Calu3 (cell line): ENCODE measurements at regions of chr1 and their contacts with region 1.

Region 1: DNA sequence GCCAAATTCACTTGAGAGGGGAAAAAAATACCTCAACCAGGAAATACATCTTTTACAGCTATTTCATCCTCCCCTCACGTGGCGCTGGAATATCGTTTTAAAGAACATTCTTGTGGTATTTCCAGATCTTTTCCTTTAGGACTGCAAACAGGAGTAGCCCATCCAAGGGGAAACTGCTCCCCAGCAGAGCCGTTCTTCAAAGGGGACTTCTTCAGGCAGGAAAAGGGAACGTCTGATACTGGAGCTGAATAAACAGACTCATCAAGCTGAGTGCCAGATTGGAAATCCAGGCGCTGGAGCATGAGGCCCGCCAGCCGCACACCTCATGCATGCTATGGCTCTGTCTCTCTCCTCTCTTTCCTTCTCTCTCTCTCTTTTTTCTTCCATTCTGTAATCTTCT is 34.0 kb upstream of the PROX1 start:
- DNase-seq: no peak
- H3K4me3 Mint-ChIP-seq: no peak overlapping the region
- H3K27ac Mint-ChIP-seq: no peak overlapping the region
- H3K4me1 Mint-ChIP-seq: no peaks in the 10 kb centered on the region
- H3K27me3 Mint-ChIP-seq: peaks cover 52% of the 10 kb centered on the region
- CTCF ChIP-seq: no peak

Region 2: DNA sequence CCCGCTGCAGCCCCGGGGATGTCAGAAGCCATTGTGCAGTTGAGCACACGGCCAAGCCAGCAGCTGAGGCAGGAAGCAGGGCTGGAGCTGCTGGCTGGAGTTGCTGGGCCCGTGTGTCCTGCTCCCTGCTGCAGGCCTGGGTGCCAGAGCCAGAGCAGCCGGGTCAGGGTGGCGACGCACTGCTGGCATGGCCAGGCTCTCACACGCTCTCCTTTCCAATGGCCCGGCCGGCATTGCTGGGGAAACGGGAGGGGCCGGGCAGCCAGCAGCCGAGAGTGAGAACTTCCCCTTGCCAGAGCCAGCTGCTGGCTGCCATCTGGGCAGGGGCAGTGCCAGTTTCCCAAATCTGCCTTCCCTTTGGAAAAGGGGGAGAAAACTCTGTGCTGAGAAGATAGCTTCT is 48.5 kb before region 1 on chr1:
- CTCF ChIA-PET with region 1: no interaction called
- intact Hi-C with region 1: loop called (anchors 5 kb)
- DNase-seq: no peak
- H3K4me3 Mint-ChIP-seq: no peak overlapping the region
- H3K27ac Mint-ChIP-seq: no peak overlapping the region
- H3K4me1 Mint-ChIP-seq: no peaks in the 10 kb centered on the region
- H3K27me3 Mint-ChIP-seq: peaks cover 54% of the 10 kb centered on the region
- CTCF ChIP-seq: no peak

Region 3: GRCh38 chr1:214102907-214103306 is 149.1 kb after region 1 on chr1:
- CTCF ChIA-PET with region 1: no interaction called
- intact Hi-C with region 1: no loop called
- DNase-seq: peak; percentile 52
- H3K4me3 Mint-ChIP-seq: no peak overlapping the region
- H3K27ac Mint-ChIP-seq: no peak overlapping the region
- H3K4me1 Mint-ChIP-seq: peaks cover 5% of the 10 kb centered on the region
- H3K27me3 Mint-ChIP-seq: no peaks in the 10 kb centered on the region
- CTCF ChIP-seq: no peak